B cell (primary cell): ENCODE measurements at regions of chr1 and their contacts with region 1.

Region 1: GRCh38 chr1:67766141-67766978 is 66.9 kb downstream of the GNG12 start:
- DNase-seq: peak; percentile 55
- ATAC-seq: peak; percentile 51
- H3K4me3 ChIP-seq: peak overlapping the region in 1 of 5 experiments; percentile 19
- H3K4me3 Mint-ChIP-seq: peak overlapping the region; percentile 64
- H3K27ac ChIP-seq: no peak overlapping the region
- H3K27ac Mint-ChIP-seq: no peak overlapping the region
- H3K4me1 ChIP-seq: peaks cover 6 to 8% of the 10 kb centered on the region in 2 donors
- H3K4me1 Mint-ChIP-seq: peaks cover 8% of the 10 kb centered on the region
- H3K27me3 ChIP-seq: peaks cover 0 to 26% (median 14%) of the 10 kb centered on the region in 4 experiments
- H3K27me3 Mint-ChIP-seq: peaks cover 49% of the 10 kb centered on the region
- CTCF ChIP-seq: peak; percentile 77

Region 2: DNA sequence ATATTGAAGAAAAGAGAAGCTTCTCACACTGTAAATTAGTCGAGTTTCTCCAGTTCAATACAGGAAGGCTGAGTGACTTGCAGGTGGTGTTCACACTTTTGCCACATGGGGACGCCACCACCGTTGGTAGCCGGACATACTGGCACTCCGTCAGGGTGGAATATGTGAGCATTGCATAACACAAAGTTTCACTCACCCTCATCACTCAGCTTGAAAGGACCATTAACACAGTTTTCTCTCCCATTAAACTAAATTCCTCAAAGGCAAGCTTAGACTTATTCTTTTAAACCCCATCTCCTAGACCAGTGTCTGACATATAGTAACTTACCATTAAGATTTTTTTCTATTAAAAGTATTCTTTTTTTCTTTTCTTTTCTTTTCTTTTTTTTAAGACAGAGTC is 230.9 kb before region 1 on chr1:
- CTCF ChIA-PET with region 1: interaction called, 200 read pairs
- POLR2A ChIA-PET with region 1: no interaction called
- intact Hi-C with region 1: no loop called
- DNase-seq: peak; percentile 19
- ATAC-seq: peak; percentile 21
- H3K4me3 ChIP-seq: no peak overlapping the region
- H3K4me3 Mint-ChIP-seq: no peak overlapping the region
- H3K27ac ChIP-seq: no peak overlapping the region
- H3K27ac Mint-ChIP-seq: no peak overlapping the region
- H3K4me1 ChIP-seq: no peaks in the 10 kb centered on the region
- H3K4me1 Mint-ChIP-seq: no peaks in the 10 kb centered on the region
- H3K27me3 ChIP-seq: no peaks in the 10 kb centered on the region
- H3K27me3 Mint-ChIP-seq: peaks cover 9% of the 10 kb centered on the region
- CTCF ChIP-seq: peak; percentile 47

Region 3: GRCh38 chr1:67561704-67562113 is 204.7 kb before region 1 on chr1:
- CTCF ChIA-PET with region 1: interaction called, 289 read pairs
- POLR2A ChIA-PET with region 1: no interaction called
- intact Hi-C with region 1: no loop called
- DNase-seq: peak; percentile 70
- ATAC-seq: peak; percentile 57
- H3K4me3 ChIP-seq: no peak overlapping the region
- H3K4me3 Mint-ChIP-seq: no peak overlapping the region
- H3K27ac ChIP-seq: no peak overlapping the region
- H3K27ac Mint-ChIP-seq: no peak overlapping the region
- H3K4me1 ChIP-seq: no peaks in the 10 kb centered on the region
- H3K4me1 Mint-ChIP-seq: no peaks in the 10 kb centered on the region
- H3K27me3 ChIP-seq: no peaks in the 10 kb centered on the region
- H3K27me3 Mint-ChIP-seq: peaks cover 10% of the 10 kb centered on the region
- CTCF ChIP-seq: peak; percentile 84

Region 4: DNA sequence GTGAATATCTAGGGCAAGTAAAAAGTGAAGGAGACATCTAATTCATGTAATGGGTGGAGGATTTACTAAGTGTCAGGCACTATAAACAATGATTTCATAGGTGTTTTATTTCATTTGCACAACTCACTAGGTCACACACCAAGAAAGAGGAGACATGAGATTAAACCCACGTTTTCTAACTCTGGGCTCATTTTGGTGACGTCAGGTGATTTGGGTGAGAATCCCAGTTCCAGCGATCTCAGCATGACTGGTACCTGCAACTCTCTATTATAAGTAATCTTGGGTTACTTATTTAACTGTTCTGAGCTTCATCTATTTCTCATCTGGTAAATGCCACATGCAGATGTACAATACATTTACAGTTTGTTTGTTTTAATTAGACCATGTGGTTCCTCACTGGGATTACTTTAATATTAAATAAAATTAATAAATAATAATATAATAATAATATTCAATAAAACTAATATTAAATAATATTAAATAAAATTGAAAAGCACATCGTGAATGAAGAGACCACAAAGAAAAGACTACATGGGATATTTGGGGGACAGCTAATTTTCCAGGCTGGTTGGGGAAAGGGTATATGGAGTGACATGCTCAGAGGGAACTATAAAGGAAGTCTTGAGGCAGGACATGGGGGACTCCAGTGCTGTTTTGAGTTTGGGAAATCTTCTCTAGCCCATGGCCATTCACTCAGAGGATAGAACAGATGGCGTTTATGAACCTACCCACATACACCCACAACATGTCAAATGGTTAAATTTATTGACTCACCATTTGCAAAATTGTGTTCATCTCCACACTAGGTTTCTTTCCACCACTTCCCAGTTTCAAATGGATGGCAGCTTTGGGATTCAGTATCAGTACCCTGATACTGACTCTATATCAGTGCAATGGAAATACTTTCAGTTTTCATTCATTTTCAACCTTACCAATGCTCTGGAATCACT is 258.3 kb after region 1 on chr1:
- CTCF ChIA-PET with region 1: no interaction called
- POLR2A ChIA-PET with region 1: no interaction called
- intact Hi-C with region 1: no loop called
- DNase-seq: no peak
- ATAC-seq: no peak
- H3K4me3 ChIP-seq: no peak overlapping the region
- H3K4me3 Mint-ChIP-seq: no peak overlapping the region
- H3K27ac ChIP-seq: no peak overlapping the region
- H3K27ac Mint-ChIP-seq: no peak overlapping the region
- H3K4me1 ChIP-seq: no peaks in the 10 kb centered on the region
- H3K4me1 Mint-ChIP-seq: no peaks in the 10 kb centered on the region
- H3K27me3 ChIP-seq: no peaks in the 10 kb centered on the region
- H3K27me3 Mint-ChIP-seq: no peaks in the 10 kb centered on the region
- CTCF ChIP-seq: no peak